ENCODE measurements at regions of chr5 and their contacts with region 1.

Region 1: GRCh38 chr5:157431544-157432200 is 28.3 kb upstream of the NIPAL4 start:
- DNase-seq: no peak
- ATAC-seq: peak; percentile 78
- H3K4me3 ChIP-seq: no peak overlapping the region
- H3K27ac ChIP-seq: no peak overlapping the region
- H3K4me1 ChIP-seq: no peaks in the 10 kb centered on the region
- H3K27me3 ChIP-seq: no peaks in the 10 kb centered on the region

Region 2: DNA sequence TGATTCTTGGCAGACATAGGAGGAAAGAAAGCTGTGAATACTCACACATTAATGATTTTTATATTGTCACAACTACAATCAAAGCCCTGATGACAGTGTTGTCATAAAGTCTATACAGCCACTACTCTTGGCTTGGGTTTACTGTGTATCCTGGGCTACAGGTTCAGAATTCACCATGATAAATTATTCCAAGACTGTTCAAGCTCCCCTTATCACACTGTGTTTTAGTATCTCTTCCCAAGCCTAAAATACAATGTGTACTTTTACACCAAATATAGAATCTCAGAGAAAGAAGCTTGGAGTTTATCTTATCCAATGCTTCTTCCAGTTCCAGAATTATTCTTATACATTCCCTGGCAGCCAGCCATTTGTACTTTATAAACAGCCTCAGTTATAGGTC is 709.3 kb before region 1 on chr5:
- intact Hi-C with region 1: no loop called
- DNase-seq: no peak
- ATAC-seq: no peak
- H3K4me3 ChIP-seq: no peak overlapping the region
- H3K27ac ChIP-seq: no peak overlapping the region
- H3K4me1 ChIP-seq: peaks cover 0 to 3% of the 10 kb centered on the region in 2 donors
- H3K27me3 ChIP-seq: no peaks in the 10 kb centered on the region

Region 3: GRCh38 chr5:157312492-157312891 is 119.2 kb before region 1 on chr5:
- intact Hi-C with region 1: no loop called
- DNase-seq: peak in 1 of 2 donors; percentile 56
- ATAC-seq: no peak
- H3K4me3 ChIP-seq: no peak overlapping the region
- H3K27ac ChIP-seq: no peak overlapping the region
- H3K4me1 ChIP-seq: no peaks in the 10 kb centered on the region
- H3K27me3 ChIP-seq: no peaks in the 10 kb centered on the region

Region 4: DNA sequence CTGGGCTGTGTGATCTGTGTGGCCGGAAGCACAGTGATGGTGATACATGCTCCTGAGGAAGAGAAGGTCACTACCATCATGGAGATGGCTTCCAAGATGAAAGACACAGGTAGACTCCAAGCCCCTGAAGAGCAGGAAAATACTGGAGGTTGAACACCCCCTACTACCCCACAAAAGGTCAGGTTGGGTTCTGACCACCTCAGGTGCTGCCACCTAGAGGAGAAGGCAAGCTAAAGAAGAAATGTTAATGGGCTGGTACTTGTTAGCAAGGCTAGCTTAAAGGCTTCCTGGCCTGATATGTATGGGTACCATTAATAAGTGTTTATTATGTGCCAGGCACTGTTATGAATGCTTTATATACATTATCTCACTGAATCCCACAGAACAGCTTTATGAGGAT is 40.0 kb after region 1 on chr5:
- intact Hi-C with region 1: loop called in 1 of 2 experiments (anchors 5 kb)
- DNase-seq: no peak
- ATAC-seq: no peak
- H3K4me3 ChIP-seq: no peak overlapping the region
- H3K27ac ChIP-seq: no peak overlapping the region
- H3K4me1 ChIP-seq: no peaks in the 10 kb centered on the region
- H3K27me3 ChIP-seq: no peaks in the 10 kb centered on the region

Region 5: GRCh38 chr5:157486221-157486681 is 54.6 kb after region 1 on chr5:
- intact Hi-C with region 1: no loop called
- DNase-seq: no peak
- ATAC-seq: no peak
- H3K4me3 ChIP-seq: no peak overlapping the region
- H3K27ac ChIP-seq: no peak overlapping the region
- H3K4me1 ChIP-seq: no peaks in the 10 kb centered on the region
- H3K27me3 ChIP-seq: no peaks in the 10 kb centered on the region

Region 6: GRCh38 chr5:157626841-157627240 is 195.2 kb after region 1 on chr5:
- intact Hi-C with region 1: no loop called
- DNase-seq: no peak
- ATAC-seq: no peak
- H3K4me3 ChIP-seq: no peak overlapping the region
- H3K27ac ChIP-seq: no peak overlapping the region
- H3K4me1 ChIP-seq: peaks cover 0 to 1% of the 10 kb centered on the region in 2 donors
- H3K27me3 ChIP-seq: no peaks in the 10 kb centered on the region

Region 7: GRCh38 chr5:157718519-157718918 is 286.8 kb after region 1 on chr5:
- intact Hi-C with region 1: loop called in 1 of 2 experiments (anchors 5 kb)
- DNase-seq: no peak
- ATAC-seq: peak; percentile 89
- H3K4me3 ChIP-seq: no peak overlapping the region
- H3K27ac ChIP-seq: no peak overlapping the region
- H3K4me1 ChIP-seq: no peaks in the 10 kb centered on the region
- H3K27me3 ChIP-seq: no peaks in the 10 kb centered on the region